Heart right ventricle (tissue), 16 donors: ENCODE measurements at regions of chr9 and their contacts with region 1.

Region 1: DNA sequence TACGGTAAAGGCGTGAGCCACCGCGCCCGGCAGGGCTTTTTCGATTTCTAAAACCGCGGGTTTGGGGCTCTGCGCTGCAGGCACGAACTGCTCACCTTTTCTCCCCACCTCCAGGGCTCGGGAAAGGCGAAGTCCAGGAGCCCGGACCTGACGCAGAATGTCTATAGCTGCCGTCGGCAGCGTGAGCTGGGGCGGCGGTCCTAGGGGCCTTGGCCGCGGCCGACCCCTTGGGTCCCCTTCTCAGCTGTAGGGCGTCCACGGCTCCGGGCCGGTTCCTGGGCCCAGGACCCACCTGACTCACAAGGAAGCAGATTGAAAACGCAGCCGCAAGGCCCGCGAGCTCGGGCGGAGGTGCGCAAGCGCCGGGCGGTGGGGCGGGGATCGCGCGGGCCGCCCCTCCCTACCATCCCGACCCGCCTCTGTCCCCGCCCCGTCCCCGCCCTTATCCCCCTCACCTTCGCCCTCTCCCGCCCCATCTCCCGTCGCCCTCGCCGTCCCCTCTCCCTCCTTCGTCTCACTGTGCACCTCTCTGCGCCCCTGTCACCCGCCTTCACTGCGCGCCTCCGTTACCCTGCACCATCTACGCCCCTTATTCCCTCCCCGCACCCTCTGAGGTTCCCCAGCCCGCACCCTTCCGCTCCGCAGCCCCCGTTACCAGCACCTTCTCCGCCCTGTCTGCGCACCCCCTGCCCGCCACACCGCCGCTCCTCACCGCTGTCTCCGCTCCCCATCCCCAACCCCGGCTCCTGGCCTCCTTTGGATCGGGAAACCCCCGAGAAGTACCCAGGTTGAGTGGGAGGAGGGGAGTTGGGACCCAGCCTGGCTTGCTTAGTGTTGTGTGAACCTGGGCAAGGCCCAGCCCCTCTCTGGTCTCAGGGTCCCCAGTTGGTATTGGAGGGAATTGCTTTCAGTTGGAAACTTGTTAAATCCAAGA is at the start of gene HDHD3:
- DNase-seq: peak; percentile 66 to 85
- ATAC-seq: peak; percentile 90 to 96 (median 94)
- H3K4me3 ChIP-seq: peak within 1 kb of the TSS; percentile 26 to 98 (median 82)
- H3K27ac ChIP-seq: peak within 1 kb of the TSS in 9 of 10 donors; percentile 59 to 84 (median 78)
- H3K4me1 ChIP-seq: peaks cover 0 to 17% (median 11%) of the 10 kb centered on the region in 9 donors
- H3K27me3 ChIP-seq: no peaks in the 10 kb centered on the region
- CTCF ChIP-seq: no peak
- total RNA-seq, gene HDHD3: 10.9 to 40.3 (median 17.2) TPM

Region 2: DNA sequence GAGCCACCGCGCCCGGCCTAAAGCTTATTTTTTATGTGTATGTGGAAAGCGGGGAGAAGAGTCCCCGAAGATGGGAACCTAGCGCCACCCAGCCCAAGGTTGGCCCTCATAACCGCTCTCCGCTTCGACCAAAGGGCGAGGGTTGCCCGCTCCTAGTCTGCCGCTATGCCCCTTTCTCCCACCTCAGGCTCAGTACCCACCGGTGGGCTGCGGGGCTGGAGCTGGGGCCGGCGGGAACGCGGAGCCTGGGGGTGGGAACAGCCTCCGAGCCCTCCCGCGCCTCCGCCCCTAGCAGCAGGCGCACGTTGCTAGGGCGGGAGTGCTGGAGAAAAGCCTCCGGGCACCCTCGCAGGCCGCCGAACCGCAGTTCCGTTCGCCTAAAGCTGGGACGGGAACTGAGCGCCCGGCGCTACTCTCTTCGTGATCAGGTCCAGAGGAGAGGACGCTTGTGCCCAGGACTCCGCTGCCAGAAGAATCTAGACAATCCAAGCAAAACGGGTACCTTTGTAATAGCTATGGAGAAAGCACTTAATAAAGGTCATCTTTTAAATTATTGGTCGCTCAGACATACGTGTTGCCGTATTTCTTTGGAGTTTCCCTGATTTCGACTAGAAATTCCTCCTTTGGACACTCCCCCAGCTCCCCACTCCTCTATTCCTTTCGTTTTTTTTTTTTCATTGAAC is 36.7 kb before region 1 on chr9 and contains the start of gene WDR31:
- intact Hi-C with region 1: loop called in 1 of 10 experiments (anchors 5 kb)
- DNase-seq: peak; percentile 86 to 88
- ATAC-seq: peak; percentile 89 to 95 (median 92)
- H3K4me3 ChIP-seq: peak within 1 kb of the TSS; percentile 62 to 97 (median 75)
- H3K27ac ChIP-seq: peak within 1 kb of the TSS; percentile 53 to 88 (median 78)
- H3K4me1 ChIP-seq: peaks cover 0 to 31% (median 22%) of the 10 kb centered on the region in 9 donors
- H3K27me3 ChIP-seq: no peaks in the 10 kb centered on the region
- CTCF ChIP-seq: peak in 2 of 9 donors; percentile 15
- total RNA-seq, gene WDR31: 13.6 to 29.0 (median 18.8) TPM

Region 3: DNA sequence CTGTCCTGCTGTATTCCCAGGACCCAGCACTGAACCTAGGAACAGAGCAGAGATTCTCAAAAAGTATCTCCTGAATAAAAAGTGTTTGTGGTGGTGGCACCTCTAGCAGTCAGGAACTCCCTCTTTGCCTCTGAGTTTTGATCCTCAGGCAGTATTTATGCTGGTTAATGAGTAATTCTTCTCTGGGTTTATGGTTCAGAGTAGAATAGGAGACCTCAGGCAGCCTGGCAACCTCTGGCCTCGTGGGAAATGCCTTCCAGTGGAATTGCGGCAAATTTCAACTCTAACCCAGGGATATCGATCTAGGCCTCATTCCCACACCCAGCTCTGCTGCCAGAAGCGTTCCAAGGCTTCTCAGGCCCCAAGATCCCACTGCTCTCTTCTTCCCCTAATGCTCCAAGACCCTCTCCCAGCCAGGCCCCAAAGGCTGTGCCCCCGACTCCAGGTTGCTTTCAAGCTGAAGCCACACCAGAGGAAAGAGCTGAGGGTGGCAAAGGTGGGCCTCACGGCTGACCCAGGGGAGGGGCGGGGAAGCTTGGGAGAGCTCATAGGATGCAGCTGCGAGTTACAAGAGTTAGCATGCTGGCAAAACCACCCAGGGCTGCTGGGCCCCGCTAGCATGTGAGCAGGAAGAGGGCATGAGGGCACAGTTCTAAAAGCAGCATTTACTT is 10.8 kb after region 1 on chr9:
- intact Hi-C with region 1: no loop called
- DNase-seq: no peak
- ATAC-seq: no peak
- H3K4me3 ChIP-seq: no peak overlapping the region
- H3K27ac ChIP-seq: no peak overlapping the region
- H3K4me1 ChIP-seq: no peaks in the 10 kb centered on the region
- H3K27me3 ChIP-seq: no peaks in the 10 kb centered on the region
- CTCF ChIP-seq: no peak